A673 (cell line): ENCODE measurements at regions of chr20 and their contacts with region 1.

Region 1: DNA sequence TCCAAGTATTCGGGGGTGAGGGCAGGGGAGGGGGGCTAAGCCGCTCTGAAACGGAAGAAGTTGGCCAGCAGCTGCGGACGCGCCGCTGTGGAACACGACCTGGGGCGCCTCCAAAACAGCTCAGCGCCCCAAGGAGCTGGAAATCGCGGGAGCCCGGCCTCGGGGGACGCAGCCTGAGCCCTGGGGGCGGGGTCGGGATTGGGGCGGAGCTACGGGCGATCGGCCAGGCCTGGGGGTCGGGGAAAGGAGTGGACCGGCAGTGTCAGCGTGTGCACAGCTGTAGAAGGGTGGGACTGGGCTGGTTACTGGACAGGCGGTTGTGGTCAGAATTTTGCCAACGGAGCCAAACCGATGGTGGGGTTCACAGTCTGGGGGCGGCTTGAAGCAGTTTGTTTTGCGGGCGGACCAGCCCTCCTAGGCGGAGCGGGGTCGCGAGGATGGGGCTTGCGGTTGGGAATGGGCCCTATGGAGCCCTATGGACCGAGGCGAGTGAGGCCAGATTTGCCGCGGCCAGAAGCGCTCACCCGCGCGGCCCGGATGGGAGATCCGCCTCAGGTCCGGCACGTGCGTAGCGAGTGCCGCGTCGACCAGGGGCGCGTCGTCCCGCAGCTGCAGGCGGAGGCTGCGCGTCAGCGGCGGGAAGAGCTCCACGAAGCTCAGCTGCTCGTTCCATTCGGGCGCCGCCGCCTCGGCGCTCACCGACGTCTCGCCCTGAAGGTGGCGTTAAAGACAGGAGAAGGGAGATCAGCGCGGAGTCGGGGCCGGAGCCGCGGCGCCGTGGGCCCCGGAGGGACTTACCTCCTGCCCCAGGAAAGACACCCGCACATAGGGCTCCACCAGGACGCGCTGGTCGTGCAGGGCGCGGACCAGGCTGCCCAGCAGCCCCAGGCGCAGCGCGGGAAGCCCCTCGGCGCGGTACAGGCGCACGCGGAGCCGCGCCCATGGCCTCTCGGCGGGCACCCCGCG is 14.3 kb upstream of the SPAG4 start:
- DNase-seq: peak; percentile 85
- H3K4me3 ChIP-seq: peak overlapping the region; percentile 42
- H3K27ac ChIP-seq: no peak overlapping the region
- H3K4me1 ChIP-seq: peaks cover 11% of the 10 kb centered on the region
- H3K27me3 ChIP-seq: peaks cover 3% of the 10 kb centered on the region
- CTCF ChIP-seq: peak; percentile 65

Region 2: DNA sequence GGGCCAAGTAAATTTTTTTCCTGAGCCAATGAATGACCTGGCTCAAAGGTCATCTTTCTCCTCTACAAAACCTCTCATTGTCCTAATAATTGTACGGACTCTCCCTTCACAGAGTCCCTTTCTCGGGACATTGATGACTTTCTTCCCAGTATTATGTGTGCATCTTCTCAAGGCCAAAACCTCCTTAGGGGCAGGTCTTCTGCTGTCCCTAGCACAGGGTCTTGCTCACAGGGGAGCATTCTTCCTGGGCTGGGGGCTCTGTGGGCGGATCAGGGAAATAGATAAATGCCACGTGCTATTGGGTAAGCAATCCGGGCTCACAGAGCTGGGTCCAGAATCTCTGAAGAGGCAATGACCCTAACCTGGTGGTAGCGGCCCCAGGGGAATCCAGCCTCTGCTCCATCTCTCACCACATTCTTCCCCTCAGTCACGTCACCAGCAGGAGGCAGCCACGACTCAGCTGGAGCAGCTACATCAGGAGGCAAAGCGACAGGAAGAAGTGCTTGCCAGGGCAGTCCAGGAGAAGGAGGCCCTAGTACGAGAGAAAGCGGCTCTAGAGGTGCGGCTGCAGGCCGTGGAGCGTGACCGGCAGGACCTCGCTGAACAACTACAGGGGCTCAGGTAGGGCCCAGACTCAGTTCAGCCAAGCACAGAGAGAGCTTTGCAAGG is 122.4 kb before region 1 on chr20:
- CTCF ChIA-PET with region 1: no interaction called
- POLR2A ChIA-PET with region 1: no interaction called
- intact Hi-C with region 1: no loop called
- DNase-seq: peak; percentile 24
- H3K4me3 ChIP-seq: no peak overlapping the region
- H3K27ac ChIP-seq: no peak overlapping the region
- H3K4me1 ChIP-seq: no peaks in the 10 kb centered on the region
- H3K27me3 ChIP-seq: no peaks in the 10 kb centered on the region
- CTCF ChIP-seq: peak; percentile 27; the same call in 1 of the 2 replicates

Region 3: DNA sequence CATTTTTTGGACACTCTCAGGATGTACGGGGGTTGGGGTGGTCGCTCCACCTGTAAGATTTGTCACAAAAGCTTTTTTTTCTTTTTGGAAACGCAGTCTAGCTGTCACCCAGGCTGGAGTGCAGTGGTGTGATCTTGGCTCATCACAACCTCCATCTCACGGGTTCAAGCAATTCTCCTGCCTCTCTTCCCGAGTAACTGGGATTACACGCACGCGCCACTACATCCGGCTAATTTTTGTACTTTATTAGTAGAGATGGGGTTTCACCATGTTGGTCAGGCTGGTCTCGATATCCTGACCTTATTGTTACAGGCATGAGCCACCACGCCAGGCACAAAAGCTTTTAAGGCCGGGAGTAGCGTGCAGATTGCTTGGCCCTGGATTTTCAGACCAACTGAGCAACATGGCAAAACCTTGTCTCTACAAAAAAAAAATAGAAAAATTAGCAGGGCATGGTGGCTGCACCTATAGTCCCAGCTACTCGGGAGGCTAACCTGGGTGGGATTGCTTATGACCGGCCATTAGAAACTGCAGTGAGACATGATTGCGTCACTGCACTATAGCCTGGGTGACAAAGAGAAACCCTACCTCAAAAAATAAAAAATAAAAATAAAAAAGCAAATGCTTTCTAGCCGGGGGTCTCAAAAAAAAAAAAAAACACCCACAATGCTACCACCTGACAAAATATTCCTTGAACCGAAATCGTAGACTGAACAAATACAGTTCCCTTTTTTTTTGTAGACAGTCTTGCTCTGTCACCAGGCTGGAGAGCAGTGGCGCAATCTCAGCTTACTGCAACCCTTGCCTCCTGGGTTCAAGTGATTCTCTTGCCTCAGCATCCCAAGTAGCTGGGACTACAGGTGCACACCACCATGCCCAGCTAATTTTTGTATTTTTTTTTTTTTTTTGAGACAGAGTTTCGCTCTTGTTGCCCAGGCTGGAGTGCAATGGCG is 125.7 kb after region 1 on chr20:
- CTCF ChIA-PET with region 1: no interaction called
- POLR2A ChIA-PET with region 1: no interaction called
- intact Hi-C with region 1: no loop called
- DNase-seq: no peak
- H3K4me3 ChIP-seq: no peak overlapping the region
- H3K27ac ChIP-seq: no peak overlapping the region
- H3K4me1 ChIP-seq: peaks cover 15% of the 10 kb centered on the region
- H3K27me3 ChIP-seq: no peaks in the 10 kb centered on the region
- CTCF ChIP-seq: no peak

Region 4: GRCh38 chr20:36573103-36573794 is 972.0 kb after region 1 on chr20 and contains the start of gene TGIF2:
- CTCF ChIA-PET with region 1: no interaction called
- POLR2A ChIA-PET with region 1: interaction called, 13 read pairs
- intact Hi-C with region 1: no loop called
- DNase-seq: peak; percentile 98
- H3K4me3 ChIP-seq: peak within 1 kb of the TSS; percentile 95
- H3K27ac ChIP-seq: peak within 1 kb of the TSS; percentile 95
- H3K4me1 ChIP-seq: peaks cover 36% of the 10 kb centered on the region
- H3K27me3 ChIP-seq: no peaks in the 10 kb centered on the region
- CTCF ChIP-seq: no peak
- total RNA-seq, gene TGIF2: 54.9 and 59.0 TPM in 2 replicates